HCT116 (cell line): ENCODE measurements at regions of chr4 and their contacts with region 1.

Region 1: DNA sequence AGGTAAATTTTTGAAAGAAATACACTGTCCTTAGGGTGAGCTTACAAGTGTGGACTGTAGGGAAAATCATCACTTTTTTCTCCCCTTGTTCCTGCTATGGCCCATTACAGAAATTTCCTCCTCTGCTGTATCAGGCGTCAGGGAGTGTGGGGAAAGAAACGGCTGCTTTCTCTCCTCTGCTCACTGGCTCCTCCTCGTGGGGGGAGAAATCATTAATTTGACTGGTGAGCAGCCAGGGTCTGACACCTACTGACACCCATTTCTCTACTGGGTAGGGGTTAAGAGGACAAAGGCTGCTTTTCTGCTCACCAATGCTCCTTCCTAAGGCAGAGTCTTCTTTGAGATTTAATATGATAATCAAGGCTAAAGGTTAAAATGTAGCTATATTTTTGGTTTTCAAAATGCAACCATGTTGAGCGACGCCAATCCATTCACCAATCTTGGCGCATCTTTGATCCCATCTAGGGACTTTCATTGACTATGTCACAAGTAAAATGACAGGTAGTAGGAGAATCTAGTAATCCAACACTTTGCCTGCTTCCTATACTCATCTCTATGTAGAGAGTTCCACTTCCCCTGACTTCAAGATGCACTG is 25.1 kb downstream of the SETD7 start:
- DNase-seq: peak; percentile 13
- ATAC-seq: peak; percentile 98
- H3K4me3 ChIP-seq: no peak overlapping the region
- H3K27ac ChIP-seq: no peak overlapping the region
- H3K4me1 ChIP-seq: no peaks in the 10 kb centered on the region; a peak in 1 of 4 replicates
- H3K27me3 ChIP-seq: no peaks in the 10 kb centered on the region
- CTCF ChIP-seq: peak; percentile 70 to 72 (median 71); a peak in 5 of 6 replicates
- POLR2A ChIP-seq: no peak
- RAD21 ChIP-seq: peak; percentile 54

Region 2: DNA sequence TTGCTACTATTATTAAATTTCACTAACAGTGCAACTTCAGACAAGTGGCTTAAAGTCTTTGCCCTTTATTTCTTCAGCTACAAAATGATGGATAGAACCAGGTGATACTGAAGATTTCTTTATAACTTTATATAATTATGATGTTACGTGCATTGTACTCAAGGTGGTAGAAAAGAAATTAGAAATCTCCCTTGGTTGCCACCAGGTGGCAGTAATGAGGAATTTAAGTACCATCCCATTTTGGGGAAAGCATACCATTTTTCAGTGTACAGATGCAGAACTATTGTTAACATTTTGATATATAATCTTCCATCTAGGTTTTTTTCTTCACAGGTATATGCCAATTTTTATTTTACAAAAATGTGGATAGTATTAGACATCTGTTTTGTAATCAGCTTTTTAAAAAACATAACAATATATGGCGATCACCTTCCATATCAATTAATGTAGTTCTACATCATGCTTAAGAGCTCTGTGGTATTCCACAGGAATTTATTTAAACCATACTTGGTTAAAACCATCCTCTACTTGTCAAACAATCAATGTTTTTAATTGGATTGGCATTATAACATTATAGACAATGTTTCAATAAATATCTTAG is 114.8 kb before region 1 on chr4:
- CTCF ChIA-PET with region 1: no interaction called
- POLR2A ChIA-PET with region 1: no interaction called
- RAD21 ChIA-PET with region 1: no interaction called
- intact Hi-C with region 1: loop called (anchors 10 kb)
- DNase-seq: peak; percentile 34
- ATAC-seq: peak; percentile 69
- H3K4me3 ChIP-seq: no peak overlapping the region
- H3K27ac ChIP-seq: no peak overlapping the region
- H3K4me1 ChIP-seq: no peaks in the 10 kb centered on the region
- H3K27me3 ChIP-seq: no peaks in the 10 kb centered on the region
- CTCF ChIP-seq: peak; percentile 48 to 71 (median 52); a peak in 5 of 6 replicates
- POLR2A ChIP-seq: no peak
- RAD21 ChIP-seq: peak; percentile 46

Region 3: DNA sequence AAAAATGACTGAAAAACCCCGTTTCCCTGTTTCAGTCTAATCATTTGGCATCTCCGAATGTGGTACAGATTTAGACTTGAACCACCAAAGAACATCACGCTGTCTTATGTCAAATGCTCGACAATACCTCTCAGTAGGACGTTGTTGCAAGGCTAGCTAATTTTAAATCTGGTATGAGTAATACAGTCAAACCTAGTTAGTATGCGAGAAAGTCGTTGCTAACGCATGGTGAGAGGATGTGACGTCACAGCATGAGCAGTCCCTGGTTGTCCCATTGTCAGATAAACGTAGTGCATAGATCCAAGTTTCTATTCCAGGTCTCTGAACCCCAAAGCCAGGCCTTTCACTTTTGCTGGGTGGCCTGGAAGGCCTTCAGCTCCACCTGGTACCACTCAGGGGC is 19.6 kb before region 1 on chr4:
- CTCF ChIA-PET with region 1: interaction called, 3 read pairs
- POLR2A ChIA-PET with region 1: no interaction called
- RAD21 ChIA-PET with region 1: no interaction called
- intact Hi-C with region 1: loop called (anchors 1 kb)
- DNase-seq: no peak
- ATAC-seq: no peak
- H3K4me3 ChIP-seq: no peak overlapping the region
- H3K27ac ChIP-seq: no peak overlapping the region
- H3K4me1 ChIP-seq: no peaks in the 10 kb centered on the region
- H3K27me3 ChIP-seq: no peaks in the 10 kb centered on the region
- CTCF ChIP-seq: no peak
- POLR2A ChIP-seq: no peak
- RAD21 ChIP-seq: no peak

Region 4: DNA sequence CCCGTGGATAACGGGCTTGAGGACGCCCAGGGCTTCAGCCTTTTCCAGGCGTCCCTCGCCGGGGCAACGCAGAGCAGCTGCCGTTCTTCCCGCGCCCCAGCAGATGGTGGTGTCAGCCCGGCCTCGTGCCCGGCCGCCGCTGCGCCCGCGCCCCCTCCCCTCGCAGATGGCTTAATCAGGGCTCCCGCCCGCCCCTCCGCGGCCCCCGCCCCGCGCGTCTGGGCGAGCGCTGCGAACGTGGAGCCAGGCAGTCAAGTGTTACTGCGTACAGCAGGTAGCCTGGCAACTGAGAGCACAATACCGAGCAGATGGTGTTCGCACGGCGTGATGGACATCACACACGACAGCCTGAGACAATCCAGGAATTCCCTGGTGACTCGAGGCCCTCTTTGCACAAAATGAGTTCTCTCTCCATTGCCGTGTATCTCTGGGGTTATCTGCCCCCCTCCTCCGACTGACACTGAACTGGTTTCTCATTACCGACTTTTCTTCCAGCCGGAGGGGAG is 204.0 kb after region 1 on chr4:
- CTCF ChIA-PET with region 1: no interaction called
- POLR2A ChIA-PET with region 1: no interaction called
- RAD21 ChIA-PET with region 1: no interaction called
- intact Hi-C with region 1: no loop called
- DNase-seq: no peak
- ATAC-seq: no peak
- H3K4me3 ChIP-seq: no peak overlapping the region
- H3K27ac ChIP-seq: no peak overlapping the region
- H3K4me1 ChIP-seq: no peaks in the 10 kb centered on the region
- H3K27me3 ChIP-seq: no peaks in the 10 kb centered on the region
- CTCF ChIP-seq: no peak
- POLR2A ChIP-seq: no peak
- RAD21 ChIP-seq: no peak